ENCODE measurements at regions of chr10 and their contacts with region 1.

Region 1: GRCh38 chr10:14822879-14823755 is 14.7 kb downstream of the CDNF start:
- DNase-seq: peak; percentile 60
- ATAC-seq: peak; percentile 60
- H3K4me3 ChIP-seq: no peak overlapping the region
- H3K27ac ChIP-seq: no peak overlapping the region
- H3K4me1 ChIP-seq: peaks cover 19% of the 10 kb centered on the region
- H3K27me3 ChIP-seq: no peaks in the 10 kb centered on the region
- CTCF ChIP-seq: peak; percentile 70

Region 2: GRCh38 chr10:14126701-14127440 is 696.2 kb before region 1 on chr10:
- CTCF ChIA-PET with region 1: no interaction called
- POLR2A ChIA-PET with region 1: no interaction called
- intact Hi-C with region 1: loop called (anchors 5 kb)
- DNase-seq: peak; percentile 76
- ATAC-seq: peak; percentile 96
- H3K4me3 ChIP-seq: no peak overlapping the region
- H3K27ac ChIP-seq: no peak overlapping the region
- H3K4me1 ChIP-seq: peaks cover 4% of the 10 kb centered on the region
- H3K27me3 ChIP-seq: no peaks in the 10 kb centered on the region
- CTCF ChIP-seq: no peak

Region 3: GRCh38 chr10:14499601-14499904 is 323.6 kb before region 1 on chr10:
- CTCF ChIA-PET with region 1: no interaction called
- POLR2A ChIA-PET with region 1: no interaction called
- intact Hi-C with region 1: loop called (anchors 1 kb)
- DNase-seq: no peak
- ATAC-seq: no peak
- H3K4me3 ChIP-seq: no peak overlapping the region
- H3K27ac ChIP-seq: no peak overlapping the region
- H3K4me1 ChIP-seq: no peaks in the 10 kb centered on the region
- H3K27me3 ChIP-seq: no peaks in the 10 kb centered on the region
- CTCF ChIP-seq: no peak

Region 4: GRCh38 chr10:14536241-14537213 is 286.6 kb before region 1 on chr10:
- CTCF ChIA-PET with region 1: interaction called, 3 read pairs
- POLR2A ChIA-PET with region 1: no interaction called
- intact Hi-C with region 1: loop called (anchors 5 kb)
- DNase-seq: peak; percentile 70
- ATAC-seq: peak; percentile 66
- H3K4me3 ChIP-seq: no peak overlapping the region
- H3K27ac ChIP-seq: no peak overlapping the region
- H3K4me1 ChIP-seq: peaks cover 27% of the 10 kb centered on the region
- H3K27me3 ChIP-seq: no peaks in the 10 kb centered on the region
- CTCF ChIP-seq: peak; percentile 63

Region 5: DNA sequence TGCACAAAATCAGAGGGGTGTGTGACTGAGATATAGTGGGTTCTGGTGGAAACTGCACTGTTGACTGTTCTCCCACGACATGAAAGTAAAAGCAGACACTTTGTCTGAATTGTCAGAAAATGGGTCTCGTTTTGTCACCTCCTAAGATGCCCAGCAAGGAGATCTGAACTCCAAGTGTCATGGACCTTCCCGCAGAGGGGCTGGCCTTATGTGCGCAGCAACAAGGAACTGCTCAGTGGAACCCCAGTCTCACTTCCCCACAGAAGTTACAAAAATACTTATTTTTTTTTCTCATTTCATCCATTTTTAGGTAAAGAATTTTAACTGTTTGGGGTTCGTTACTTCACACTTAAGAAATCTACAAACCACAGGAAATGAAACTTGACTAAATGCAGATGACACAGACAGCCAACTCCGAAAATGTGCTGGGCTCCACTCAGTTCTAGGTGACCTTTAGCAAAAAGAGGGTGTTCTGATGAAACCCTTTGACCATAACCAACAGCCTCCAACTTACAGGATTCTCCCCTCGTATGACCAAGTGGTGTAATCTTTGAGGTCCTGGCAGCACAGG is 163.4 kb before region 1 on chr10:
- CTCF ChIA-PET with region 1: no interaction called
- POLR2A ChIA-PET with region 1: no interaction called
- intact Hi-C with region 1: loop called (anchors 5 kb)
- DNase-seq: no peak
- ATAC-seq: no peak
- H3K4me3 ChIP-seq: no peak overlapping the region
- H3K27ac ChIP-seq: peak overlapping the region; percentile 97
- H3K4me1 ChIP-seq: peaks cover 26% of the 10 kb centered on the region
- H3K27me3 ChIP-seq: no peaks in the 10 kb centered on the region
- CTCF ChIP-seq: no peak

Region 6: GRCh38 chr10:14670551-14671240 is 152.4 kb before region 1 on chr10:
- CTCF ChIA-PET with region 1: no interaction called
- POLR2A ChIA-PET with region 1: no interaction called
- intact Hi-C with region 1: loop called (anchors 5 kb)
- DNase-seq: peak; percentile 57
- ATAC-seq: peak; percentile 87
- H3K4me3 ChIP-seq: peak overlapping the region; percentile 65
- H3K27ac ChIP-seq: peak overlapping the region; percentile 99
- H3K4me1 ChIP-seq: peaks cover 27% of the 10 kb centered on the region
- H3K27me3 ChIP-seq: no peaks in the 10 kb centered on the region
- CTCF ChIP-seq: no peak

Region 7: GRCh38 chr10:14782691-14783363 is 40.3 kb before region 1 on chr10:
- CTCF ChIA-PET with region 1: no interaction called
- POLR2A ChIA-PET with region 1: no interaction called
- intact Hi-C with region 1: loop called (anchors 2 kb)
- DNase-seq: peak; percentile 85
- ATAC-seq: peak; percentile 81
- H3K4me3 ChIP-seq: no peak overlapping the region
- H3K27ac ChIP-seq: peak overlapping the region; percentile 94
- H3K4me1 ChIP-seq: peaks cover 47% of the 10 kb centered on the region
- H3K27me3 ChIP-seq: no peaks in the 10 kb centered on the region
- CTCF ChIP-seq: no peak

Measured in PC-3 (cell line).